Naive thymus-derived CD8-positive, alpha-beta T cell (primary cell): ENCODE measurements at regions of chr11 and their contacts with region 1.

Region 1: GRCh38 chr11:64742889-64743590 is 902 bp downstream of the RASGRP2 start:
- DNase-seq: peak; percentile 57 to 91 (median 78)
- ATAC-seq: peak; percentile 7 to 11
- H3K4me3 Mint-ChIP-seq: peak overlapping the region in 8 of 10 donors; percentile 89 to 100 (median 99)
- H3K27ac Mint-ChIP-seq: peak overlapping the region in 7 of 10 donors; percentile 90 to 99 (median 98)
- H3K4me1 Mint-ChIP-seq: peaks cover 29 to 54% (median 44%) of the 10 kb centered on the region in 4 donors
- H3K27me3 Mint-ChIP-seq: peaks cover 0 to 2% (median 0%) of the 10 kb centered on the region in 5 donors

Region 2: GRCh38 chr11:64688534-64688982 is 54.5 kb before region 1 on chr11:
- POLR2A ChIA-PET with region 1: interaction called, 14 read pairs
- DNase-seq: peak; percentile 84 to 95 (median 90)
- ATAC-seq: peak; percentile 99
- H3K4me3 Mint-ChIP-seq: peak overlapping the region; percentile 23 to 79 (median 60)
- H3K27ac Mint-ChIP-seq: peak overlapping the region in 7 of 10 donors; percentile 6 to 76 (median 43)
- H3K4me1 Mint-ChIP-seq: peaks cover 18 to 29% (median 24%) of the 10 kb centered on the region in 4 donors
- H3K27me3 Mint-ChIP-seq: peaks cover 2 to 24% (median 10%) of the 10 kb centered on the region in 5 donors

Region 3: DNA sequence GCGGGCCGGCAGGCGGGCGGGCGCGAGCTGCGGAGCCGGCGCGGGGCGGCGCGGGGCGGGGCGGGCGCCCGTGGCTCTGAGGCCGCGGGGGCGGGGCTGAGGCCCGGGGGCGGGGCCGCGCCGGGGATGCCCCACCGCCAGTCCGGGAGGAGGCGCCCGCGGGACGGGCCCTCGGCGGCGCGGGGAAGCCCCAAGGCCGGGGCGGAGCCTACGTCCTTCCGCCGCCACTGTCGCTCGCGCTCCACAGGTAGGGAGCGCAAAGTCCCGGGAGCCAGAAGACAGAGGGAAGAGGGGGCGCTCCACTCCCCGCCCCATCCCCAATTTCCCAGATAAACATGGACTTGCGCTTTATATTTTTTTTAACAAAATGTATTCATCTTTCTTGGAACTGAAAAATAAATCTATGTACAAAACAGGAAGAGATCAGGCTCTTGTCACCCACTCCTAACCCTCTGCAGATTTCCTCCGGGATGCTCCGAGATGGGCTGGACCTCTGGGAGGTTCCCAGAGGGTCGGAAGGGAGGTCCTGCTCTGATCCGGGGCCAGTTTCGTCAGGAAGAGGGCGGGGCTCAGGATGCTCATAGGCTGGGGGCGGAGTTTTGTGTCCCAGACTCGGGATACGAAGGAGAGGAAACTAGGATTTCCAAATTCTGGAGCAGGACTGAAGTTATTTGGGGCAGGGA is 60.3 kb after region 1 on chr11 and contains the start of gene MAP4K2:
- POLR2A ChIA-PET with region 1: interaction called, 88 read pairs
- DNase-seq: peak; percentile 72 to 95 (median 84)
- ATAC-seq: peak; percentile 86 to 89
- H3K4me3 Mint-ChIP-seq: peak within 1 kb of the TSS; percentile 81 to 91 (median 87)
- H3K27ac Mint-ChIP-seq: peak within 1 kb of the TSS; percentile 79 to 95 (median 92)
- H3K4me1 Mint-ChIP-seq: peaks cover 22 to 52% (median 46%) of the 10 kb centered on the region in 4 donors
- H3K27me3 Mint-ChIP-seq: no peaks in the 10 kb centered on the region
- polyA plus RNA-seq, gene MAP4K2: 26.6 to 55.5 (median 30.3) TPM

Region 4: GRCh38 chr11:64846998-64847666 is 104.1 kb after region 1 on chr11:
- POLR2A ChIA-PET with region 1: interaction called, 46 read pairs
- DNase-seq: peak; percentile 81 to 98 (median 90)
- ATAC-seq: peak; percentile 46 to 56
- H3K4me3 Mint-ChIP-seq: peak overlapping the region in 6 of 10 donors; percentile 36 to 74 (median 56)
- H3K27ac Mint-ChIP-seq: peak overlapping the region in 9 of 10 donors; percentile 32 to 88 (median 79)
- H3K4me1 Mint-ChIP-seq: peaks cover 35 to 69% (median 64%) of the 10 kb centered on the region in 4 donors
- H3K27me3 Mint-ChIP-seq: no peaks in the 10 kb centered on the region

Region 5: GRCh38 chr11:64878494-64879243 is 135.6 kb after region 1 on chr11 and contains the start of gene EHD1:
- POLR2A ChIA-PET with region 1: interaction called, 24 read pairs
- DNase-seq: peak; percentile 99 to 100 (median 100)
- ATAC-seq: peak; percentile 73 to 81
- H3K4me3 Mint-ChIP-seq: peak within 1 kb of the TSS; percentile 92 to 99 (median 98)
- H3K27ac Mint-ChIP-seq: peak within 1 kb of the TSS; percentile 90 to 99 (median 96)
- H3K4me1 Mint-ChIP-seq: peaks cover 41 to 71% (median 64%) of the 10 kb centered on the region in 4 donors
- H3K27me3 Mint-ChIP-seq: no peaks in the 10 kb centered on the region
- polyA plus RNA-seq, gene EHD1: 137 to 164 (median 154) TPM

Region 6: GRCh38 chr11:65134386-65135253 is 391.6 kb after region 1 on chr11 and contains the start of gene SYVN1:
- POLR2A ChIA-PET with region 1: interaction called, 10 read pairs
- DNase-seq: peak; percentile 84 to 97 (median 90)
- ATAC-seq: peak; percentile 89 to 90
- H3K4me3 Mint-ChIP-seq: peak within 1 kb of the TSS; percentile 94 to 100 (median 98)
- H3K27ac Mint-ChIP-seq: peak within 1 kb of the TSS; percentile 99 to 100 (median 100)
- H3K4me1 Mint-ChIP-seq: peaks cover 26 to 57% (median 45%) of the 10 kb centered on the region in 4 donors
- H3K27me3 Mint-ChIP-seq: no peaks in the 10 kb centered on the region
- polyA plus RNA-seq, gene SYVN1: 7.9 to 10.6 (median 8.2) TPM